Activated CD4-positive, alpha-beta T cell treated with anti-CD3 and anti-CD28 coated beads, Interleukin-2, amount 10 ng/mL, durations not matched to agents 7 days and 5 days (primary cell): ENCODE measurements at regions of chr3 and their contacts with region 1.

Region 1: DNA sequence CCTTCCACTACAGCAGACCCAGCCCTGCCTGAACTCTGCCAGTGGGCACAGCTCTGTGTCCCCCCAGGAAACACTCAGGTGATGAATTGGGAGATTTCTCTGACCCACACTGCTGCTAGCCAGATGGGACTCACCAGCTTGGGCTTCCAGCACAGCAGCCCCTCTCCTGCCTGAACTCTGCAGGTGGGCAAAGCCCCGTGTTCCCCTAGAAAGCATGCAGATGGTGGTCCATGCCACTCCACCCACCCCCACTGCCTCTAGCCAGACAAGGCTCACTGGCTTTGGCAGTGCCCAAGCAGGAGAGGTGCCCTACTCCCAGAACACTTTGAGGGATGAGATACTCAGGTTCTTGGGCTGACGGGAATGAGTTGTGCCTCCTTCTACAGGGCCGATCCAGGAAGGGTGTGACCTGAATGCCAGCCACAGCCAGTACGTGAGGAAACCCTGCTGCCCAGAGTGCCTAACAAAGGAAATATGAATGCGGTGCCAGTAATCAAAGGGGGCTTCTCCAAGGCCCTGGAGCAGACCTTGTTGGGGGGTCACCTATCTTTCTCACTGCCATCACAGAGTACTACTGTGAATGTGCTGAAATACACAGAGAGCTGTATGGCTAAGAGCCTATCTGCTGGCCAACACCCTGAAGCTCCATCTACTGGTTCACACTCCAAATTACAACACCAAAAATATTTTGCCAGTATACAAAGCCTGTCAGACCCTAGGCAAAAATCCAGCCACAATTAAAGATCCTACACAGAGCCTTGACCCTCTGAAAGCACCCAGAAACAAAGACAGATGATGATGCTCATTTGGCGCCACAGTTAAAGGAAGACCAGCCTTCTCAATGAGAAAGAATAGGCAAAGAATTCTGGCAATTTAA is 61.9 kb downstream of the BTLA start:
- DNase-seq: peak; percentile 41
- H3K4me3 Mint-ChIP-seq: no peak overlapping the region
- H3K27ac Mint-ChIP-seq: peak overlapping the region; percentile 81
- H3K4me1 Mint-ChIP-seq: peaks cover 30% of the 10 kb centered on the region
- H3K27me3 Mint-ChIP-seq: no peaks in the 10 kb centered on the region

Region 2: DNA sequence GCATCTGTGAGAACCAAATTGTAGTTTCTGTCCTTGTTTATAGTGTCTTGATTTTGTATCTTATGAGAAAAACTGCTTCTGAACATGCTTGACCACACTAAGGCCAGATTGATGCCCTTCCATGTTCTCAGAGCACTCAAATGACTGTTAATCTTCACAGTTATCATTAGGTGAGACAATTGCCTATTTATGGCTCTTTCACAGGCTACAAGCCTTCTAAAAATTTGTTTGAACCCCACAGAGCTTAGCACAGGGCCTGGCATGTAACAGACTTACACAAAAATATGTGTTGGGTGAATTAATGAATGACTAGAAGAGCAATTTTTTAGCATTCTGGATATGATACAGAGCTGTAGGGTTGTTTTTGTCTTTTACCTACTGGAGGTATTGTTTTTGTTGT is 18.8 kb after region 1 on chr3:
- CTCF ChIA-PET with region 1: interaction called, 10 read pairs
- POLR2A ChIA-PET with region 1: no interaction called
- DNase-seq: no peak
- H3K4me3 Mint-ChIP-seq: no peak overlapping the region
- H3K27ac Mint-ChIP-seq: no peak overlapping the region
- H3K4me1 Mint-ChIP-seq: peaks cover 25% of the 10 kb centered on the region
- H3K27me3 Mint-ChIP-seq: no peaks in the 10 kb centered on the region

Region 3: GRCh38 chr3:112685420-112685819 is 248.0 kb after region 1 on chr3:
- CTCF ChIA-PET with region 1: no interaction called
- POLR2A ChIA-PET with region 1: no interaction called
- DNase-seq: no peak
- H3K4me3 Mint-ChIP-seq: no peak overlapping the region
- H3K27ac Mint-ChIP-seq: no peak overlapping the region
- H3K4me1 Mint-ChIP-seq: peaks cover 17% of the 10 kb centered on the region
- H3K27me3 Mint-ChIP-seq: peaks cover 10% of the 10 kb centered on the region